Gastrocnemius medialis (tissue), 4 donors: ENCODE measurements at regions of chr11 and their contacts with region 1.

Region 1: GRCh38 chr11:10808553-10809372 is at the start of gene EIF4G2:
- DNase-seq: peak; percentile 99
- ATAC-seq: peak; percentile 91 to 92
- H3K4me3 ChIP-seq: peak within 1 kb of the TSS; percentile 77 to 97 (median 91)
- H3K27ac ChIP-seq: peak within 1 kb of the TSS; percentile 94 to 99 (median 97)
- H3K4me1 ChIP-seq: peaks cover 29 to 34% of the 10 kb centered on the region in 2 donors
- H3K27me3 ChIP-seq: no peaks in the 10 kb centered on the region
- CTCF ChIP-seq: no peak
- POLR2A ChIP-seq: peak; percentile 99
- total RNA-seq, gene EIF4G2: 397 to 521 (median 465) TPM

Region 2: DNA sequence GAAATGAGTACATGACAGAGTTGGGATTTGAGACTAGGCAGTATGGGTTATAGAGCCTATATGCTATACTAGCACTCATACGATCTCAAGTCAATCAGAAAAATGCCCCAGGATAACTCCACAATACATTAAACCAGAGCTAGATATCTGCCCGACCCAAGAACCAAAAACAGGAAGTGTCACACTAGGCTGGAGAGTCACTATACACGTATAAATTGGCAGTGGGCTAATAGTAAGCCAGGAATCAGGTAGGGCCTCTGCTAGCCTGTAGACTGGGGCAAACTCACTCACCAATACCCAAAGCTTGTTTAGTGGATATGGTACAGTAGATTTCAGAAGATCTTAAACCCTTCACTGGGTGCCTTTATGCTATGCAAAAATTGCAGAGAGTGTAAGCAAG is 16.1 kb after region 1 on chr11:
- in situ Hi-C with region 1: no loop called
- intact Hi-C with region 1: no loop called
- DNase-seq: no peak
- ATAC-seq: no peak
- H3K4me3 ChIP-seq: no peak overlapping the region
- H3K27ac ChIP-seq: no peak overlapping the region
- H3K4me1 ChIP-seq: no peaks in the 10 kb centered on the region
- H3K27me3 ChIP-seq: no peaks in the 10 kb centered on the region
- CTCF ChIP-seq: no peak
- POLR2A ChIP-seq: no peak

Region 3: GRCh38 chr11:10844796-10845195 is 36.0 kb after region 1 on chr11:
- in situ Hi-C with region 1: loop called in 1 of 4 experiments (anchors 5 kb)
- intact Hi-C with region 1: no loop called
- DNase-seq: no peak
- ATAC-seq: no peak
- H3K4me3 ChIP-seq: no peak overlapping the region
- H3K27ac ChIP-seq: no peak overlapping the region
- H3K4me1 ChIP-seq: peaks cover 17 to 19% of the 10 kb centered on the region in 2 donors
- H3K27me3 ChIP-seq: no peaks in the 10 kb centered on the region
- CTCF ChIP-seq: no peak
- POLR2A ChIP-seq: no peak

Region 4: DNA sequence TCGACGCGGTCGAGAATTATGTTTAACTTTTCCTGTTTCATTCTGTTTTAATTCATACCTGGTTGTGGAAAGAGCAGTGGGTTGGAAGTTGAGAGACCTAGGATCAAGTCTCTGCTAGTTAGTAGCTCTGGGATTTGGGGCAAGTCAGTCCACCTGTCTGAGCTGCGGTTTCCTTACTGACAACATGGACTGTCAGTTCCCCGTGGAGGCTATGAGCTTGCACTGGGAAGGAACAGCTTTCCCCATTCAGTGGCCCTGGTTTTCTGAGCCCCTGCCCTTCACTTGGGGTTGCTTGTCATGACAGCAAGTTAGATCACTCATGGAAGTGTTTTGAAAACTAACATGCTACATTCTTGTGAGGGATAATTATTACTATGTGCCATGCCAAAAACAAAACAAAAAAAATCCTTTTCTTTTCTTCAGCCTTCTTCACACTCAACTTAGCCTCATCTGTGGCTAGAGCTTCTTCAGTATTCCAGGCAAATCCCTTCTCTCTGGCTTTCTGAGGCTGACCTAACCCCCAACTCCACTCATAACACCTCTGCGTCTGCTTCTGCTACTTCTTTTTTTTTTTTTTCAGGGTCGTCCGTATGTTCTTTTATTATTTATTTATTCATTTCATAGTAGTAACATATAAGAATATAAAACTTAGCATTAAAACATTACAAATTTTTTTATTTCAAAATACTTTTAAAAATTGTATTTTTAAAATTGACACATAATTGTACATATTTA is 92.1 kb after region 1 on chr11:
- in situ Hi-C with region 1: no loop called
- intact Hi-C with region 1: loop called (anchors 1 kb)
- DNase-seq: peak; percentile 60 to 63
- ATAC-seq: peak; percentile 41 to 61
- H3K4me3 ChIP-seq: peak overlapping the region in 3 of 4 donors; percentile 7 to 55 (median 20)
- H3K27ac ChIP-seq: peak overlapping the region; percentile 88 to 96 (median 94)
- H3K4me1 ChIP-seq: peaks cover 56 to 60% of the 10 kb centered on the region in 2 donors
- H3K27me3 ChIP-seq: no peaks in the 10 kb centered on the region
- CTCF ChIP-seq: no peak
- POLR2A ChIP-seq: no peak

Region 5: DNA sequence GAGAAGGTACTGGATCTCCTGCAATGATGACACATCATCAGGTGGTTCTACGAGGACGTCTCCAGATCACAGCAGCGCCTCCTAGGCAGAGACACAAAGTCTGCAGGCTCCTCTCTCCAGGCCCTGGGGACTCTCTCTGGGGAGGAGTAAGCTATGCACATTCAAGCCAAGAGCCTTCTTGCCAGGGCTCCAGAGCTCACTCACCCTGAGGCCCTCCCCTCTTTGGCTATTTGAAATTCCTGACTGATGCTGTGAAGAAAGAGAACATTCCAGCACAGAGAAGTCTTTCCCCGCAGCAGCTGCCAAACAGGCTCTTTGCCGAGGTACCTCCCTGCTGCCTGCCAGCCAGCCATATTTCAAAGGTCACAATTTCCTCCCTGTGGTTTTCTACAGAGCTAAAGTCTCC is 339.3 kb after region 1 on chr11:
- in situ Hi-C with region 1: loop called in 1 of 4 experiments (anchors 25 kb)
- intact Hi-C with region 1: no loop called
- DNase-seq: peak; percentile 86 to 94
- ATAC-seq: peak; percentile 79 to 84
- H3K4me3 ChIP-seq: no peak overlapping the region
- H3K27ac ChIP-seq: peak overlapping the region; percentile 79 to 95 (median 92)
- H3K4me1 ChIP-seq: peaks cover 27 to 49% of the 10 kb centered on the region in 2 donors
- H3K27me3 ChIP-seq: no peaks in the 10 kb centered on the region
- CTCF ChIP-seq: peak; percentile 20 to 46 (median 37)
- POLR2A ChIP-seq: no peak